CD8-positive, alpha-beta T cell (primary cell): ENCODE measurements at regions of chr18 and their contacts with region 1.

Region 1: DNA sequence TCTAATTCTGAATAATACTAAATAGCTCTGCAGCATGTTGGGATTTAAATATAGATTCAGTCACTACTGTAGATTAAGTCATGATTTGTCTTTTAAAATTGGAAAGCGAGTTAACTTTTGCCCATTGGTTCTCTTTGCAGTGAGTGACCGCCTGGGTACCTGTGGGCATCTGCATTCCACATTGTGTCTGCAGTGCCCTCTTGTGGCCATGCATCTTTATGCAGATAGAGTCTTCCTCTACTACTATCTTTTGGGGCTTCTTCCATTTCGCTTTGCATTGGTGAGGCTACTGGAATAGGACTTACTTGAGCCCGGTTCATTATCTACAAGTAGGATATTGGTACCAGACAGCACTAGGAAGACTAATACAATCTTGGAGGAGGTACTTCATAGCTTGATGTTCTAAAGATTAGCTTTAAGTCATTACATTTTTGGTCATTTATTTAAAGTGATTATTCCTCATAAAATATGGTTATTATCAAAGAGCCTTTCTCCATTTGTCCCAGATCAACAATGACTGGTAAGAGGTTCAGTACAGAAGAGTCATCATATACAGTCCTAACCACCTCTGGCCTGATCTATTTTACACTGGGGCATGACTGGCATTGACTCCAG is 203.0 kb downstream of the SOCS6 start:
- DNase-seq: peak in 8 of 9 experiments; percentile 24 to 63 (median 48)
- ATAC-seq: peak; percentile 61
- H3K4me3 ChIP-seq: no peak overlapping the region
- H3K4me3 Mint-ChIP-seq: no peak overlapping the region
- H3K27ac ChIP-seq: no peak overlapping the region
- H3K27ac Mint-ChIP-seq: no peak overlapping the region
- H3K4me1 ChIP-seq: peaks cover 5% of the 10 kb centered on the region
- H3K4me1 Mint-ChIP-seq: peaks cover 14% of the 10 kb centered on the region
- H3K27me3 ChIP-seq: no peaks in the 10 kb centered on the region
- H3K27me3 Mint-ChIP-seq: no peaks in the 10 kb centered on the region
- CTCF ChIP-seq: peak; percentile 85

Region 2: GRCh38 chr18:70781860-70782453 is 290.1 kb after region 1 on chr18:
- CTCF ChIA-PET with region 1: interaction called, 8 read pairs
- POLR2A ChIA-PET with region 1: no interaction called
- intact Hi-C with region 1: loop called in 1 of 2 experiments (anchors 1 kb)
- DNase-seq: peak; percentile 32 to 76 (median 65)
- ATAC-seq: peak; percentile 96
- H3K4me3 ChIP-seq: no peak overlapping the region
- H3K4me3 Mint-ChIP-seq: no peak overlapping the region
- H3K27ac ChIP-seq: no peak overlapping the region
- H3K27ac Mint-ChIP-seq: peak overlapping the region; percentile 0
- H3K4me1 ChIP-seq: peaks cover 5% of the 10 kb centered on the region
- H3K4me1 Mint-ChIP-seq: peaks cover 22% of the 10 kb centered on the region
- H3K27me3 ChIP-seq: no peaks in the 10 kb centered on the region
- H3K27me3 Mint-ChIP-seq: no peaks in the 10 kb centered on the region
- CTCF ChIP-seq: peak; percentile 46

Region 3: DNA sequence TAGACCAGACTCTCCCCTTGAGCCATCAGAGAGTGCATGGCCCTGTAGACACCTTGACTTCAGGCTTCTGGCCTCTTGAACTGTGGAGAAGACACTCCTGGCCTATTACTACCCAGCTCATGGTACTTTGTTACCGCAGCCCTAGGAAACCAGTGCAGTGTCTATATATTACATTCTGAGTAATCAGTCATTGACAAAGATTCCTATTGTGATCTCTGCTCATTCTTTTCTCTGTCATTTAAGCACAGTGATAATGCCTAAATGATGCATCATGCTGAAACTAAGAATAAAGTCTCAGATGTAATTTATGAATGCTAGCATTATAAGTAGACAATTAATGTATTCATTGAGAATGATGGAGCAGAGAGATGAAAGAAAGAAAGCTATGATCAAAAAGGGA is 400.5 kb after region 1 on chr18:
- CTCF ChIA-PET with region 1: interaction called, 5 read pairs
- POLR2A ChIA-PET with region 1: no interaction called
- intact Hi-C with region 1: loop called in 1 of 2 experiments (anchors 10 kb)
- DNase-seq: no peak
- ATAC-seq: no peak
- H3K4me3 ChIP-seq: no peak overlapping the region
- H3K4me3 Mint-ChIP-seq: no peak overlapping the region
- H3K27ac ChIP-seq: no peak overlapping the region
- H3K27ac Mint-ChIP-seq: no peak overlapping the region
- H3K4me1 ChIP-seq: no peaks in the 10 kb centered on the region
- H3K4me1 Mint-ChIP-seq: no peaks in the 10 kb centered on the region
- H3K27me3 ChIP-seq: no peaks in the 10 kb centered on the region
- H3K27me3 Mint-ChIP-seq: no peaks in the 10 kb centered on the region
- CTCF ChIP-seq: no peak

Region 4: DNA sequence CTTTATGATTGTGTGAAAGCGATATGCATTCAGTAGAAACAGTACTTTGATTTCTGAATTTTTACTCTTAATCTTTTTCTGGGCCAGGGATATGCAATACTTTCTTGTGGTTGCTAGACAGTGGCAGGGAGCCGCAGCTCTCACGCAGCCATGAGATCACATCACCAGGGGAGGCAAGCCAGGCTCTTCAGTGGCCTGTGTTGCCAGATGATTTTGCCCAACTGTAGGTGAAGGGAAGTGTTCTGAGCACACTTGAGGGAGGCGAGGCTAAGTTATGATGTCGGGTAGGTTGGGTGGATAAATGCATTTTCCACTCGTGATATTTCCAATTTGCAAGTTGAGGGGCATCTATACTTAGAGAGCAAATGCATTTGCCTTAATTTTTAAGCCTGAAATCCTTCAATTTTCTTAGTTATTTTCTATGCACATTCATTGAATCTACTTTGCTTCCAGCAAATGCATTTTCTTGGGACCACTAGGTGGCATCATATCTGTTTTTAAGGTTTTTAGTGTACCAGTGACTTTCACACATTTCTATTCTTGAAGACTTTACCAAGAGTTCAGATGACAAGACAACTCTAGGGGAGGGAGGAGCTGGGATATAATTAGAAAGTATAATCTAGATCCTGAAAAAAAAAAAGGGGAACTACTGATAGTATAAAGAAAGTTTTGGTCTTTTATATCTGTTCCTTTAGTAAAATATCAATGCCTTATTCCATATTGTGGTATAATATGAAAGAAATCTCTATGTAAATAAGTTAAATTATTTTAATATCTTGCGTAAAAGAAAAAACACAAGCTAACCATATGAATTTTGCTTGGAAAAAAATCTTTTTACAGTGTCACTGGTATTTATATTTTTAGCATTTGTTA is 440.3 kb after region 1 on chr18:
- CTCF ChIA-PET with region 1: interaction called, 3 read pairs
- POLR2A ChIA-PET with region 1: no interaction called
- intact Hi-C with region 1: loop called in 1 of 2 experiments (anchors 5 kb)
- DNase-seq: peak in 2 of 9 experiments; percentile 7 to 22
- ATAC-seq: peak; percentile 42
- H3K4me3 ChIP-seq: no peak overlapping the region
- H3K4me3 Mint-ChIP-seq: no peak overlapping the region
- H3K27ac ChIP-seq: no peak overlapping the region
- H3K27ac Mint-ChIP-seq: peak overlapping the region; percentile 4
- H3K4me1 ChIP-seq: peaks cover 4% of the 10 kb centered on the region
- H3K4me1 Mint-ChIP-seq: peaks cover 8% of the 10 kb centered on the region
- H3K27me3 ChIP-seq: no peaks in the 10 kb centered on the region
- H3K27me3 Mint-ChIP-seq: no peaks in the 10 kb centered on the region
- CTCF ChIP-seq: peak; percentile 42

Region 5: GRCh38 chr18:71784777-71785176 is 1292.9 kb after region 1 on chr18:
- CTCF ChIA-PET with region 1: interaction called, 3 read pairs
- POLR2A ChIA-PET with region 1: no interaction called
- intact Hi-C with region 1: loop called (anchors 2 to 5 kb)
- DNase-seq: peak in 2 of 9 experiments; percentile 4 to 15
- ATAC-seq: no peak
- H3K4me3 ChIP-seq: no peak overlapping the region
- H3K4me3 Mint-ChIP-seq: no peak overlapping the region
- H3K27ac ChIP-seq: no peak overlapping the region
- H3K27ac Mint-ChIP-seq: no peak overlapping the region
- H3K4me1 ChIP-seq: no peaks in the 10 kb centered on the region
- H3K4me1 Mint-ChIP-seq: no peaks in the 10 kb centered on the region
- H3K27me3 ChIP-seq: no peaks in the 10 kb centered on the region
- H3K27me3 Mint-ChIP-seq: no peaks in the 10 kb centered on the region
- CTCF ChIP-seq: no peak

Region 6: GRCh38 chr18:72086421-72086820 is 1594.6 kb after region 1 on chr18:
- CTCF ChIA-PET with region 1: no interaction called
- POLR2A ChIA-PET with region 1: no interaction called
- intact Hi-C with region 1: loop called (anchors 2 kb)
- DNase-seq: peak in 1 of 9 experiments; percentile 17
- ATAC-seq: no peak
- H3K4me3 ChIP-seq: no peak overlapping the region
- H3K4me3 Mint-ChIP-seq: no peak overlapping the region
- H3K27ac ChIP-seq: no peak overlapping the region
- H3K27ac Mint-ChIP-seq: no peak overlapping the region
- H3K4me1 ChIP-seq: no peaks in the 10 kb centered on the region
- H3K4me1 Mint-ChIP-seq: no peaks in the 10 kb centered on the region
- H3K27me3 ChIP-seq: no peaks in the 10 kb centered on the region
- H3K27me3 Mint-ChIP-seq: no peaks in the 10 kb centered on the region
- CTCF ChIP-seq: no peak